Right ventricle myocardium inferior (tissue), 1 donor: ENCODE measurements at regions of chr4 and their contacts with region 1.

Region 1: DNA sequence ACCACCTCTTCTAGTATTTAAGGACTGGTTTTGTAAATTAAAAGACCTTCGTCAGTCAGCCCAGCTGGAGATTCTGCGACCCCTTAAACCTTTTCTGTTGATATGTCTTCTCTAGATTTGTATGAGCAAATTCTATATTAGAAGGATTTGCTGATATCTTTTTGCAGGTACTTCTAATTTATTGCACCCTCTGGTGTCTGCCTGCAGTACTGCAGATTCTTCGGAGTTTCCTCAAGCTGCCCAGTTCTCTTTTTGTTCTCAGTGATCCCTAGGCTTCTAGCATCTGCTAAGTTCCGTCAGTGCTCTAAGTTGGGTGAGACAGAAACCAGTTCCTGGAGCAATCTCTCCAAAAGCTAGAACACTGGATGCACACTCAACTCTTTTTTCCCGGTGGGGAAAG is 545.2 kb downstream of the C4orf33 start:
- DNase-seq: no peak
- ATAC-seq: no peak

Region 2: DNA sequence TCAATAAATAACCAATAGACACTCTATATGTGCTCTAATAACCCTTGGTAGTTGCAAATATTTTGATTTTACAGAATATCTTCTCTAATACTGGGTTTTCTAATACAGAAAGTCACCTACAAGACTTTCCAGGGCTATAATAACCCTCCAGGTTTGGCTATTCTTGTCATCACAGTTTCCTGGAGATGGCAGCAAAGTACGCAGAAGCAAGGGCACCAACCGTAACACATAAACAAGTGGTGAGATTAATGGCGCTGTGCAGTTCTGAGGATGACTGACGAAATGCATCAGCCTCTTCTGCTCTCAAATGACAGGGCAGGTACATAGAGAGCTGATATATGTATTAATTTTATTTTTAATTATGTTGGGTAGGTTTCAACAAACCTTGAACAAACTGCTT is 422.8 kb before region 1 on chr4:
- intact Hi-C with region 1: loop called (anchors 5 kb)
- DNase-seq: no peak
- ATAC-seq: peak; percentile 56

Region 3: DNA sequence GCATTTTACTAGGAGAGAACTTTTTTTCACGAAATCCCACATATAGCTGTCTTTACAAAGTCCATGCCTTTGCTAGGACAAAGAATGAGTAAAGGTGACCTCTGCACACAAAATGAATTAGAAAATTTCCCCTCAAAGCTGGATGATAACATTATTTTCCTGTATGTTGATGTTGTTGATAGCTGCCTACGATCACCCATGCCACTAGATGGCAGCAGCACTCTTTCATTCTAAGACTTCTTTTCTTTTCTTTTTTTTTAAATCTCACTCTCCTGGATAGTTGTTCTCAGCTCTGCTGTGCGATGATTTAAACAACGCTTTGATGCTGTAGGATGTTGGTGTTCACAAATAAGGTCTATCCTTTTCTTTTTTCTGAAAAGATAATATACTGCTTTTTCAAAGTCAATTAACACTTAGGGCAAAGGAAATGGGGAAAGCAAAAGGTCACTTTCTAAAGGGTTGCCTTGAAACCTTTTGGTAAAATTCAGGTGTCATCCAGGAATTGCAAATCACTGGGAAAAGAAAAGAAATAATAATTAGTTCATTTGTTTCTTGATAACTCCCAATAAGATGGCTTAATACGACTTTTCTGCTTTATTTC is 278.4 kb before region 1 on chr4:
- intact Hi-C with region 1: loop called (anchors 2 kb)
- DNase-seq: no peak
- ATAC-seq: peak; percentile 50

Region 4: DNA sequence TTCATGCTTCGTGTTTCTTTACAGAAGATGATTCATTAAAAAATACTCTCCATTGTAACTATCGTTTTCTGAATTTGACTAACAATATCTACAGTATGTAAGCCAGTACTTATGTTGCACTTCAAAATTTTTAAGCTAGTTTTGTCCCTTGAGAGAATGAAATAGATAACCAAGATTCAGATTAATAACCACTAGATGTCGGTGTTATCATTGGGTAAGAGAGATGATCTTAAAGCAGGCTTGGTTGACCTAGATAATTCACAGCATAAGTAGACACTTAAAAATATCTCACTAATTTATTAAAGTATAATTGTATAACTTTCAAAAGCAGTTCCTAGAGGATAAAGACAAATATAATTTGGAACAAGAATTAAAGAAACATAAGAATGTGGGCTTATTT is 114.4 kb before region 1 on chr4:
- intact Hi-C with region 1: loop called (anchors 2 kb)
- DNase-seq: no peak
- ATAC-seq: no peak

Region 5: GRCh38 chr4:129672941-129673340 is 31.8 kb after region 1 on chr4:
- intact Hi-C with region 1: no loop called
- DNase-seq: no peak
- ATAC-seq: no peak

Region 6: GRCh38 chr4:130306566-130306965 is 665.4 kb after region 1 on chr4:
- intact Hi-C with region 1: no loop called
- DNase-seq: no peak
- ATAC-seq: no peak